Activated B cell treated with CpG ODN at 0.5 μM for 24 hours (primary cell): ENCODE measurements at regions of chr2 and their contacts with region 1.

Region 1: DNA sequence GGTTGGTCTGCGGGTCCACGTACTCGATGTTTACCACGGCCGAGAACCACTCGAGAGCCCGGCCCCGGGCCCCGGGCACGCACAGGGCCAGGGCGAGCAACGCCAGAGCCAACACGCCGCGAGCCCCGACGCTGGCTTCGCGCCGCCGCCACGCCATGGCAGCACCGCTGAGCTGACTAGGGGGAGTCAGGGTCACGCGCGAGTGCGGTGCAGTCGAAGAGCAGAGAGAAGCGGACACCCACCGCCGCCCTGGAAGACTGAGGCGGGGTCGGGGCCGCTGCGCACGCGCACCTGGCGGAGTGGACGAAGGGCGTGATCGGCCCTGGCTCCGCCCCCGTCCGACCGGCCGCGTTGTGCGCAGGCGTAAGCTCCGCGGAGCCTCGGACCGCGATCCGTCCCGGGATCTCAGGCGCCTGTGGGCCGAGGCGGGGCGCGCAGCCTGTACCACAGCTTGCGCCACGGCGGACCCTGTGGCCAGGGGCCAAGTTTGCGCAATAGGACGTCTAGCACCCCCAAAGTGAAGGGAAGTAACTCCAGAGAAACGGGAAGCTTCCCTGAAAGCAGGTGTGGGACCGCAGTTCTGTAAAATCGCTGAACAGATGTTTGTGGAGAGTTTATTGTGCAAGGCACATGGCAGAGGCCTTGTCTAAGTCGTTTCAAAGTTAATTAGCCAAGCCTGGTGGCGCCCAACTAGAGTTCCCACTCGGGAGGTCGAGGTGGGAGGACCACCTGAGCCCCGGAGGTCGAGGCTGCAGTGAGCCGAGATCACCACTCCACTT is at the start of gene RNF149:
- DNase-seq: peak; percentile 97
- ATAC-seq: peak; percentile 79
- H3K4me3 Mint-ChIP-seq: peak within 1 kb of the TSS; percentile 85
- H3K27ac Mint-ChIP-seq: peak within 1 kb of the TSS; percentile 90
- H3K4me1 Mint-ChIP-seq: peaks cover 54% of the 10 kb centered on the region
- H3K27me3 Mint-ChIP-seq: no peaks in the 10 kb centered on the region
- CTCF ChIP-seq: no peak
- total RNA-seq, gene RNF149: 39.6 and 48.3 TPM in 2 replicates

Region 2: DNA sequence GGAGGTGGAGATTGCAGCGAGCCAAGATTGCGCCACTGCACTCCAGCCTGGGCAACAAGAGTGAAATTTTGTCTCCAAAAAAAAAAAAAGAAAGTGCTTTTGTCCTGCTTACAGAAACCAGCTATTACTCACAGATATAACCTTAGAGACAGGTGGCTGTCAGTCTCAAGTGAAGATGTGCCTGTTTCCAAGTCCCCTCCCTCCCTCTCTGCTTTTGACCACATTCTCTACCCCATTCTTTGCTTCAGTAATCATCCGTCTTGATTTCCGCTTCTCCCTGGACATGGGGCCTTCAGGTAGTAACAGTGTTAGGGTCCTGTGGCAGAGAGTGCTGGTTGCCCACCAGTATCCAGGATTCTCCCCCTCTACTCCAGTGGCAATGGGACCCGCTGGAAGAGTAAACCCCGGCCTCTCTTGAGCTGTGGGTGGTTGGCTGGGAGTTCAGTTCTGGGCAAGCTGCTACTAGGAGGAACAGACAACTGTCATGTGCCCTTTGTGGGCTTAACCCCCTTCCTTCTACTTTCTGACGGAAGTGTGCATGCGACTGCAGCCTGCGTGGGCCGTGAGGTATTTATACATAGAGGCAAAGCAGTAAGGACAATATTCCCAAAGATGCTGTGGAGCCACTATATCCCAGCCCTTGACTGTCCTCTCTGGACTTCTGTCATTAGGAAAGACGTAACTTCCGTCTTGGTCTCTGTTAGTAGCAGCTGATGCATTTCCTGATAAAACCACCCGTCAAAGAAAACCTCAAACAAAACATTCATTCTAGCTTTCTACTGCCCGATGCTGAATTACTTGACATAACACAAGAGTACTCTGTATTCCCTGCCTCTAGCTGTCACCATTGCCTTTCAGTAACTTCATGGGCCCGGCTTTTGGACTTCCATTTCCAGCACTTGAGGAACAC is 728.0 kb before region 1 on chr2:
- CTCF ChIA-PET with region 1: interaction called, 4 read pairs
- POLR2A ChIA-PET with region 1: interaction called, 13 read pairs
- intact Hi-C with region 1: no loop called
- DNase-seq: peak; percentile 50
- ATAC-seq: peak; percentile 79
- H3K4me3 Mint-ChIP-seq: peak overlapping the region; percentile 56
- H3K27ac Mint-ChIP-seq: peak overlapping the region; percentile 99
- H3K4me1 Mint-ChIP-seq: peaks cover 22% of the 10 kb centered on the region
- H3K27me3 Mint-ChIP-seq: no peaks in the 10 kb centered on the region
- CTCF ChIP-seq: no peak

Region 3: DNA sequence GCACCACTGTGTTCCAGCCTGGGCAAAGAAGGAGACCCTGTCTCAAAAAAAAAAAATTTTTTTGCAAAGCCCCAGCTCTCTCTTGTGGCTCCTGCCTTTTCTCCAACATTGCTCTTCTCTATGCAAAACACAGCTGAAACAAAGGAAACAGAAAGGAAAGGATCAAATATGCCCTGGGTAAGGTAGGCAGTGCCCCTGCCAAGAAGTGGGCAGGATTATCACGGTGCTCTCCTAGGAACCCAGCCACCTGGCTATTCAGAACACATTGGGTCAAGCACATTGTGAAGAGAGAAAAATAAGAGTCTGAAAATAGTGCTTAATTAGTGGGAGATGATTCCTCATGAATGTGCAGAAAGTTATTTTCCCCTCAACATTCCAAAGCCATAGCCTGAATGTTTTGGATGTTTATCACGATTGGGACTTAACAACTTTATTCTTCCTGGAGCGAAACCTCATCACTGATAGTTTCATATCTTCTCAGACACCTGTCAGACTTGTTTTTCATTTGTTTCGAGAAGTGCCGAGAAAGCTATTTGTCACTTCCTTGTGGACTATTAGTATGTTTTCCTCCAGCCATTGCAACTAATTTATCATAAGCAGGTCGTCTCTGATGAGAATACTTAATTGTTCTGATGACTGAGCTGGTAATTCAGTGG is 349.3 kb before region 1 on chr2:
- CTCF ChIA-PET with region 1: no interaction called
- POLR2A ChIA-PET with region 1: no interaction called
- intact Hi-C with region 1: no loop called
- DNase-seq: no peak
- ATAC-seq: no peak
- H3K4me3 Mint-ChIP-seq: no peak overlapping the region
- H3K27ac Mint-ChIP-seq: no peak overlapping the region
- H3K4me1 Mint-ChIP-seq: no peaks in the 10 kb centered on the region
- H3K27me3 Mint-ChIP-seq: peaks cover 17% of the 10 kb centered on the region
- CTCF ChIP-seq: no peak

Region 4: DNA sequence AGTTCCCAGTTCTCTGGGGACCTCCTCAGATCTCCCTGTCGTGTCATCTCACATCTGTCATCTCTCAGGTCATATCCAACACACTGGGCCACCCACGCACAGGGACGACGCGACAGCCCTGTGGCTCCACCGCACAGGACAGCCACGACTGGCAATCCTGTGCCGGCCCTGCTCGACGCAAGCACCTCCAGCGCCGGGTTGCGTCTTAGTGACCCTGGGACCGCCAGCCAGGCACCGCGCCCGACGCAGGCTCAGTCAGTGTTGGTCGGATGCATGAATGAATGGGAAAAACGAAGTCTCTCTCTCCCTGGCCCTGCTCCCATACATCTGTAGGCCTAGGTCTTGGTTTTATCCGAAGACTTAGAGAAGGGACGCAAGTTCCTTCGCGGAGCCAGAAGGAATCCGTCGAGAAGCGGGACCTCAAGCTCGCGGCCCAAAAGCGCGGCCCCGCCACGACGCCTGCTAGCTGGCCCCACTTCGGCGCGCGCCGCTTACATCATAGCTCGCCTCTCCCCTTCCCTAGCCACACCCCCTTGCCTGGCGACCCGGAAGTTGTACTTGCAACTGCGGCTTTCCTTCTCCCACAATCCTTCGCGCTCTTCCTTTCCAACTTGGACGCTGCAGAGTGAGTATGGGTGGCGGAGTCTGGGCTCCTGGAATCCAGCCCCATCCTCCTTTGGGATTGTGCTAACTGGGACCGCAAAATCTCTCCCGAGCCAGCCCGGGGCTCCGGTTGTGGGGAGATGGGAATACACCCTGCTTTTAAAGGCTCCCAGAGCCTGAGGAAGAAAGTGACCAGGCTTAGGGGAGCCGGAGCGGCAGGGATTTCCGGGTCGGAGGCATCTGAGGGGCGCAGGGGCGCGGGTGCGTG is 306.7 kb before region 1 on chr2 and contains the start of gene RPL31:
- CTCF ChIA-PET with region 1: no interaction called
- POLR2A ChIA-PET with region 1: interaction called, 4 read pairs
- intact Hi-C with region 1: loop called (anchors 2 kb)
- DNase-seq: peak; percentile 86
- ATAC-seq: peak; percentile 95
- H3K4me3 Mint-ChIP-seq: peak within 1 kb of the TSS; percentile 97
- H3K27ac Mint-ChIP-seq: peak within 1 kb of the TSS; percentile 95
- H3K4me1 Mint-ChIP-seq: peaks cover 38% of the 10 kb centered on the region
- H3K27me3 Mint-ChIP-seq: no peaks in the 10 kb centered on the region
- CTCF ChIP-seq: no peak
- total RNA-seq, gene RPL31: 1,828 and 2,370 TPM in 2 replicates

Region 5: DNA sequence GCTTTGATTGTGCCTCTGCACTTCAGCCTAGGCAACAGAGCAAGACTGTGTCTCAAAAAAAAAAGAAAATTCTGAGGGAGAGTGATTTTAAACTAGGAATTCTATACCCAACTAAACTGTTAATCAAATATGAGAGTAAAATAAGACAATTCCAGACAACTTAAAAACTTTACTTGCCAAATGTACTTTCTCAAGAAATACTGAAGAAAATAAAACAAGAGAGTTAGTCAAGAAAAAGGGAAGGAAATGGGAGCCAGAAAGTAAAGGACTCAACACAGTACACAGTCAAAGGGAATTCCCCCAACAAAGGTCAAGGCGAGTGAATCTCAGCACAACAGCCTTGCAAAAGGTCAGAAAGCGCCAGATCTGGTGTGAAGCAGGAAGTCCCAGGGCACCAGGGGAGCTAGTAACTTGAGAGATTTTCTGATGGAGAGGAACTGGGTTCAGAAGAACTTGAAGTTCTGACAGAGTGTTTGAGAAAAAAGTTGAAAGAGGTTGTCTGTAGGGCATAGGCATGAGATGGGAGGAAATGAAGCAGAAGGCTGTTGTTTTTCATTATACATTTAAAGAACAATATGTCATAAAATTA is 134.8 kb before region 1 on chr2:
- CTCF ChIA-PET with region 1: no interaction called
- POLR2A ChIA-PET with region 1: no interaction called
- intact Hi-C with region 1: loop called (anchors 2 kb)
- DNase-seq: peak; percentile 39
- ATAC-seq: peak; percentile 100
- H3K4me3 Mint-ChIP-seq: peak overlapping the region; percentile 29
- H3K27ac Mint-ChIP-seq: peak overlapping the region; percentile 87
- H3K4me1 Mint-ChIP-seq: peaks cover 35% of the 10 kb centered on the region
- H3K27me3 Mint-ChIP-seq: peaks cover 2% of the 10 kb centered on the region
- CTCF ChIP-seq: no peak

Region 6: DNA sequence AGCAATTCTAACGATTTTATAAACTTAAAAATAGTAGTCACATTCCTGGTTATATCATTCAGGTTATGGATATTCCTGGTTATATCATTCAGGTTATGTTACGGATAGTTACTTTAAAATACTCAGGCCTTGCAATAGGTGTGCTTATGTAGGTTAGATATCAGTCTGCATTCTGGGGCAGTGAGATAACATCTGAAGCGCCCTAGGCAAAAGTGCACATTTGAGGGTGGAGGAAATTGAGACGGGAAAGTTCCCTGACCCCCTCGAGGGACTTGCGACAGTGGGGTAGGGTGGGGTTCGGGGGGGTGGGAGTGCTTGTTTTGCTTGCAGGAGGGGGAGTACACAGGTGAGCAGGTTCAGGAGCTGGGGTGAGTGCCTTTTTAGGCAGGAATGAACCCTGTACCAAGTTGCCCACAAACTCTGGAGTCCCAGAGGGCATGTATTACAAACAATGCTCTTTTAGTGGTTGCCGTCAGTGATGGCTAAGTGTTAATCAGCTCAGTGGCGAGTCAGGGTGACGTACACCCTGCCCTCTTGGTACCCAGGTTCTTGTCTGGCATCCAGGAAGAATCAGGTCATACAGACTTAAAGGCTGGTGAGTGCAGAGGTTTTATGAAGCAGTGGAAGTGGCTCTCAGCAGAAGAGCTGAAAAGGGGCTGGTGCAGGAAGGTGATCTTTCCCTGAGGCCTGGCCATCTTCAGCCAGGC is 47.0 kb after region 1 on chr2:
- CTCF ChIA-PET with region 1: no interaction called
- POLR2A ChIA-PET with region 1: no interaction called
- intact Hi-C with region 1: no loop called
- DNase-seq: no peak
- ATAC-seq: no peak
- H3K4me3 Mint-ChIP-seq: no peak overlapping the region
- H3K27ac Mint-ChIP-seq: no peak overlapping the region
- H3K4me1 Mint-ChIP-seq: peaks cover 8% of the 10 kb centered on the region
- H3K27me3 Mint-ChIP-seq: no peaks in the 10 kb centered on the region
- CTCF ChIP-seq: no peak

Region 7: GRCh38 chr2:101400048-101400447 is 91.4 kb after region 1 on chr2:
- CTCF ChIA-PET with region 1: no interaction called
- POLR2A ChIA-PET with region 1: interaction called, 15 read pairs
- intact Hi-C with region 1: loop called (anchors 2 kb)
- DNase-seq: no peak
- ATAC-seq: peak; percentile 30
- H3K4me3 Mint-ChIP-seq: peak overlapping the region; percentile 56
- H3K27ac Mint-ChIP-seq: peak overlapping the region; percentile 84
- H3K4me1 Mint-ChIP-seq: peaks cover 58% of the 10 kb centered on the region
- H3K27me3 Mint-ChIP-seq: peaks cover 5% of the 10 kb centered on the region
- CTCF ChIP-seq: no peak